ENCODE measurements at regions of chr11 and their contacts with region 1.

Region 1: DNA sequence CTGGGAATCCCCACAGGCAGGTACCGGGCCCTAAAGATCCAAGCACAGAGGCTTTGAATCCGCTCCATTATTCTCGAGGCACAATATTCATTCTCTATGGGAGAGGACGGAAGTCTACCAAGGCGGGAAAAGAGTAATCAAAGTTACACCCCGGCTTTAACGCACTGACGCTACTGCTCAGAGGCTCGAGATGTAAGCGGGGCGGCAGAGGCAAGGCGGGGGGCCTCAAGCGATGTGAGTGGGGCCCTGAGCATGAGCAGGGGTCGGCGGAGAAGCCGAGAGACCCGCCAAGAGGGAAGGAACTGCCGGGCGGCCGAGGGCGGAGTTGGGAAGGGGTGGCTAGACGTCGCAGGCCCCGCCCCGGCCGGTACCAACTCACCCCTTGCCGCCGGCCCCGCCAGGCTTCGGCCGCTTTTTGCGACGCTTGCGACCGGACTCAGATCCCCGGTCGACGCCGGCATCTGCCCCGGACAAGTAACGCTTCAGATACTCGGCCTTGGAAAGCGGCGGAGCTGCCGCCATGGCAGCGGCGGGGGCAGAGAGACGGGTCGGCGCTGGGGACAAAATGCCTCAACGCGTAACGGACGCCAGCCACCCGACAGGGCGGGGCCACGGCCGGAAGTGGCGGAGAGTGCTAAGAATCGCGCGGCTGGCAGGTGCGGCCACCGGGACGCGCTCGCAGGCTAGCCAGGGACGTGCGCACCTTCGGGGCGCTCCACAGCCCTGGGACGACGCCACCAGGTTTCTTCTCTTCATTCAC is at the start of gene BUD13:
- DNase-seq: peak; percentile 96
- H3K4me3 Mint-ChIP-seq: peak within 1 kb of the TSS; percentile 99
- H3K27ac Mint-ChIP-seq: peak within 1 kb of the TSS; percentile 95
- H3K4me1 Mint-ChIP-seq: peaks cover 55% of the 10 kb centered on the region
- H3K27me3 Mint-ChIP-seq: no peaks in the 10 kb centered on the region
- total RNA-seq, gene BUD13: 30.3 to 32.7 TPM

Region 2: DNA sequence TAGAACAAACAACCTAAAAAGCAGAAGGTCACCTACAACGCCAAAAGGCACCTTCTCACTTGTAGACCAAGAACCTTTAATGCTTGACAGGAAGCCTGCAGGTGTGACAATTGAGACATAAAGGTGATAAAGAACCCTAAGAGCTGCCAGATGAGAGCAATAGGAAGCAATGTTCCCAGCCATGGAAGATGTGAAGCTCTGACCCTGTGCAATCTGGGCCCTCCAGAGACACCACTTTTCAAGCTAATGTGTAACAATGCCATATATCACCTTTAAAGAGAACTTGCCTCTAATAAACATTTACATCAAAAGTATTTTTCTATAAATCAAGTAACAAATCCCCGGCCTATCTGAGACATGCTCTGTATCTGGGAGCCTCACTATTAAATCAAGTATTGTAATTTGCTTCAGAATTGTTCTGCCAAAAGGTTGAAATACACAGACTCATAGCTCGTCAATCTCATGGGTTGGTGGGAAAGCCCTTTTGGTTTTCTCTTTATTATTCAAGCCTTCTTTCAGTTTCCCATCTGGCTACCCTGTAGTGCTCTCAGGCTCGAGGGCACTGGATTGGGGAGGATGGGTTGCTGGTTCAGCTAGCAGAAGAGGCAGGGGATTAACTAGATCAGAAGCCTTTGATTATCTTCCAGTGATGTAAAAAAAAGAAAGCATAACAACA is 368.7 kb before region 1 on chr11:
- CTCF ChIA-PET with region 1: no interaction called
- POLR2A ChIA-PET with region 1: no interaction called
- intact Hi-C with region 1: no loop called
- DNase-seq: no peak
- H3K4me3 Mint-ChIP-seq: no peak overlapping the region
- H3K27ac Mint-ChIP-seq: no peak overlapping the region
- H3K4me1 Mint-ChIP-seq: no peaks in the 10 kb centered on the region
- H3K27me3 Mint-ChIP-seq: no peaks in the 10 kb centered on the region

Region 3: DNA sequence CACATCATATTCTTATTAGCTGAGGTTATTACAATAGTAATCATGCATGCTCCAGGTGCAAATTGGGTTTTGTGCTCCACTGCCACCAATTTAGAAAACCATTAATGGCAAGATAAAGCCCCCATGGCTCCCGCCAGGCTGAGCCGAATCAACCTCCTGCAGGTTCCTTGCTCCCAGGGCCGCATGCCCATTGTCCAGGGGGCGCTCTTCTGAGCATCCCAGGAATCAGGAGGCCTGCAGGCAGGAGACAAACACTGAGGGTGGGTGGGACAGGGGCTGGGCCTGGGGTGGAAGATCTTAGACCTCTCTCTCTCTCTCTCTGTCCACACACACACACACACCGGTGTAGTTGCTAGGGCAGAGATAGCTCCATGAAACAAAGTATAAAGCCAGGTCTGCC is 57.2 kb before region 1 on chr11:
- CTCF ChIA-PET with region 1: no interaction called
- POLR2A ChIA-PET with region 1: no interaction called
- intact Hi-C with region 1: no loop called
- DNase-seq: no peak
- H3K4me3 Mint-ChIP-seq: no peak overlapping the region
- H3K27ac Mint-ChIP-seq: no peak overlapping the region
- H3K4me1 Mint-ChIP-seq: no peaks in the 10 kb centered on the region
- H3K27me3 Mint-ChIP-seq: peaks cover 11% of the 10 kb centered on the region

Region 4: DNA sequence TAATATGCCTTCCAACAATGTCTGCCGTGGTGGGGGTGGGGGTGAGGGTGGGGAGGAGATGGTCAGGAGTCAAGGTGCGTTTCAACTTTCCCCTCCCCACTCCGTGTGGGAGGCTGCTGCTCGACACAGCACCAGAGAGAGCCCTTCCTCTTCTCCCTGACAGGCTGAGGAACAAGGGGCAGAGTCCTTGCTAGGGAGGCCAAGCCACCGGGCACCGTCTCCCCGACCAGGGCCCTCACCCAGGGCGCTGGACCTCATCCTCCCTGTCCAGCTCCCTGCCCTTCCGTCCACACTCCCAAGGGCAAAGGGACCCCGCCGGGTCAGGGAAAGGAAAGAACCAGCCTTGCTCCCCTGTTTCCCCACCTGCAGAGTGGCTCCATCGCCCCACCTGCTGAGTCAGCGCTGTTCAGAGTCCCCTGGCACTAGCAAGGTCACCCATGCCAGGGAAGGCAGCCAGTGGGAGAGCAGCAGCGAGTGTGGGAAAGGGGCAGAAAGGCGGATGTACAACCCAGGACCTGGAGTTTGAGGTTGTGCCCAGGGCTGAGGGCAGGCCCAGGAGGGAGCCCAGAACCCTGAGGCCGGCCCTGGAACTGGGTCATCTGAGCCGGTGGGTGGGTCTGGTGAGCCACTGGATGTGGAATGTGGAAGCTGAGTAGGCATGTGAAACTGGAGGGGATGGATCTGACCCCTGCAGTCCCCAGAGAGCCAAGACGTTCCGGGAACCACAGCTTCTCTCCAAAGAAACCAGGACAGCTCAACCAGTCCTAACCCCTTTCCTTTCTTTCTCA is 47.0 kb before region 1 on chr11:
- CTCF ChIA-PET with region 1: no interaction called
- POLR2A ChIA-PET with region 1: no interaction called
- intact Hi-C with region 1: no loop called
- DNase-seq: no peak
- H3K4me3 Mint-ChIP-seq: no peak overlapping the region
- H3K27ac Mint-ChIP-seq: no peak overlapping the region
- H3K4me1 Mint-ChIP-seq: no peaks in the 10 kb centered on the region
- H3K27me3 Mint-ChIP-seq: peaks cover 1% of the 10 kb centered on the region

Region 5: GRCh38 chr11:116948391-116948790 is 175.8 kb after region 1 on chr11:
- CTCF ChIA-PET with region 1: no interaction called
- POLR2A ChIA-PET with region 1: no interaction called
- intact Hi-C with region 1: loop called (anchors 5 kb)
- DNase-seq: peak; percentile 68
- H3K4me3 Mint-ChIP-seq: no peak overlapping the region
- H3K27ac Mint-ChIP-seq: no peak overlapping the region
- H3K4me1 Mint-ChIP-seq: peaks cover 41% of the 10 kb centered on the region
- H3K27me3 Mint-ChIP-seq: no peaks in the 10 kb centered on the region

Region 6: GRCh38 chr11:117020287-117020686 is 247.7 kb after region 1 on chr11:
- CTCF ChIA-PET with region 1: no interaction called
- POLR2A ChIA-PET with region 1: no interaction called
- intact Hi-C with region 1: loop called (anchors 5 kb)
- DNase-seq: peak; percentile 65
- H3K4me3 Mint-ChIP-seq: no peak overlapping the region
- H3K27ac Mint-ChIP-seq: peak overlapping the region; percentile 11
- H3K4me1 Mint-ChIP-seq: peaks cover 67% of the 10 kb centered on the region
- H3K27me3 Mint-ChIP-seq: no peaks in the 10 kb centered on the region

Region 7: DNA sequence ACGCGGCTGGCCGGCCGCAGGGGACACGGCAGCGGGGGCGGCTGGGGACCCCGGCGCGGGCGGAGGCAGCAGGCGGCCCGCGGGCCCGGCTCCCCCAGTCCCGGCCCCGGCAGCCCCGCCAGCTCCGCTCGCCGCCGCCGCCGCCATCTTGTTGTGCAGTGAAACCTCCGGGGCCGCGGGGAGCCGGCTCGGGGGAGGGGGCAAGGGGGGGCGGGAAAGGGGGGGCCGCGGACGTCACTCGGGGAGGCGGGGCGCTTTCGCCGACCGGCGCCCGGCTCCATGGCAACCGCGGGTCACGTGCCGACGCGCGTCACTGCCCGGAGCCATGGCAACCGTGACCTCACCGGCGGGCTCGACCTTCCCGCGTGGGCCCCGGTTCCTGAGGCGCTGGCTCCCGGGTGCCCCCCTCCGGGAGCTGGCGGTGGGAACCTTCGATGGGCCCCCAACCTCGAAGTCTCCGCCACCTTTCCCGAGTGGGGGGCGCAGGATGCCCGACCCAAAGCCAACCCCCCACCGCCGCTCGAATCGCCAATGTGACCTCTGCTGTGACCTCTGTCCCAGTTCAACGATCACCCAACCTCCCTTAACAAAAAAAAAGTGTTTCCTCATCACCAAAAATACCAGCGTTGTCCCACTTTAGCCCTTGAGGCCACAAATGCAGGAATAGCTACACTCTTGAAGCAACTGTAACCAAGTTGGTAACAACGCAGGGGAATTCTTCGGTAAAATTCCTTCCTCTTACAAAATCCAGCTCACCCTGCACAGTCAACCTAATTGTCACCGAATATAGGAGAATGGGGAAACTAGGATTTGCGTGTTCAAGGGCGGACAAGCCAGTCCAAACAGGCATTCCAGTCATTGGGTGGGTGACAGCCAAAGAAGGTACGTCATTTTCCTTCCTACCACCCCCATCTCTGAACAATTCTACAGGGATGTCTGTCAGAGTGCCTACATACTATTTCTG is 325.9 kb after region 1 on chr11 and contains the start of gene SIK3:
- CTCF ChIA-PET with region 1: no interaction called
- POLR2A ChIA-PET with region 1: interaction called, 3 read pairs
- intact Hi-C with region 1: loop called (anchors 5 kb)
- DNase-seq: peak; percentile 94
- H3K4me3 Mint-ChIP-seq: peak within 1 kb of the TSS; percentile 88
- H3K27ac Mint-ChIP-seq: peak within 1 kb of the TSS; percentile 91
- H3K4me1 Mint-ChIP-seq: peaks cover 43% of the 10 kb centered on the region
- H3K27me3 Mint-ChIP-seq: no peaks in the 10 kb centered on the region
- total RNA-seq, gene SIK3: 26.1 to 26.2 TPM